ENCODE measurements at regions of chr3 and their contacts with region 1.

Region 1: DNA sequence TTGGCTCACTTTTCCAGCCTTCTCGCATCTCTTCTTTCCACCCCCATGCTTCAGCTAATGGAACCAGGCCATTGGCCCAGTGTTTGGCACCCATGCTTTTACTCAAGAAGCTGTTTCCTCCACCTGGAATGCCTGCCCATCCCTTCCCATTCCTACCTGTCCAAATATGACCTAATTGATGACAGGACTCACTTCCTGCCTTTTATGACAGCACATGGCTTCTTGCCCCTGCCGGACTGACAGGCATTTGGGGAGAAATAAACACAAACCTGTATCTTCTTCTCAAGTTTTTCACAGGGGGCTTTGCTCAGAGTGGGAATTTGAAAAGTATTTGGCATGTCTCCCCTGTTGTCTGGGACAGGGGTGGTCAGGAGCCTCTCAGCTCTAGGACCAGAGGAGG is 120.1 kb downstream of the ABHD5 start:
- DNase-seq: no peak
- H3K4me3 ChIP-seq: no peak overlapping the region
- H3K27ac ChIP-seq: no peak overlapping the region
- H3K4me1 ChIP-seq: peaks cover 5% of the 10 kb centered on the region
- H3K27me3 ChIP-seq: no peaks in the 10 kb centered on the region
- CTCF ChIP-seq: no peak

Region 2: DNA sequence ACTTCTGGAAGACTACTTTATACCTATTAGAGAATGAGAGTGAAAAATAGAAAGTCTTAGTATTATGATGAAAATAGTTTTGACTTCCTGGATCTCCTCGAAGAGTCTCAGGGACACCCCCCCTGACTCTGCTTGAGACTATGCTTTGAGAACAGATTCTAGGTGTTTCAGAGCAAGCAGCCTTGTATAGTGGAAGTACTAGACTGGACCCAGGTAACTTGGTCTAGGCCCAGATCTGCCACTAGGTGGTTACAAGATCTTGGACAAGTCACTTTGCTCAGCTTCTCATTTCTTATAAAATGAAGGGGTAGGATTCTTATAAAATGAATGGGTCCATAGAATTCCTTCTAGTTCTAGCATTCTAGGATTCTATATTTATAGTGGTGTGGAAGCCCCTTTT is 110.9 kb before region 1 on chr3:
- CTCF ChIA-PET with region 1: no interaction called
- dilution Hi-C with region 1: no loop called
- in situ Hi-C with region 1: no loop called
- intact Hi-C with region 1: no loop called
- DNase-seq: peak; percentile 37
- H3K4me3 ChIP-seq: no peak overlapping the region
- H3K27ac ChIP-seq: no peak overlapping the region
- H3K4me1 ChIP-seq: peaks cover 18% of the 10 kb centered on the region
- H3K27me3 ChIP-seq: no peaks in the 10 kb centered on the region
- CTCF ChIP-seq: peak; percentile 58 to 69

Region 3: GRCh38 chr3:43776101-43776500 is 34.7 kb before region 1 on chr3:
- CTCF ChIA-PET with region 1: interaction called, 19 read pairs
- dilution Hi-C with region 1: no loop called
- in situ Hi-C with region 1: no loop called
- intact Hi-C with region 1: no loop called
- DNase-seq: no peak
- H3K4me3 ChIP-seq: no peak overlapping the region
- H3K27ac ChIP-seq: no peak overlapping the region
- H3K4me1 ChIP-seq: peaks cover 6% of the 10 kb centered on the region
- H3K27me3 ChIP-seq: no peaks in the 10 kb centered on the region
- CTCF ChIP-seq: no peak

Region 4: DNA sequence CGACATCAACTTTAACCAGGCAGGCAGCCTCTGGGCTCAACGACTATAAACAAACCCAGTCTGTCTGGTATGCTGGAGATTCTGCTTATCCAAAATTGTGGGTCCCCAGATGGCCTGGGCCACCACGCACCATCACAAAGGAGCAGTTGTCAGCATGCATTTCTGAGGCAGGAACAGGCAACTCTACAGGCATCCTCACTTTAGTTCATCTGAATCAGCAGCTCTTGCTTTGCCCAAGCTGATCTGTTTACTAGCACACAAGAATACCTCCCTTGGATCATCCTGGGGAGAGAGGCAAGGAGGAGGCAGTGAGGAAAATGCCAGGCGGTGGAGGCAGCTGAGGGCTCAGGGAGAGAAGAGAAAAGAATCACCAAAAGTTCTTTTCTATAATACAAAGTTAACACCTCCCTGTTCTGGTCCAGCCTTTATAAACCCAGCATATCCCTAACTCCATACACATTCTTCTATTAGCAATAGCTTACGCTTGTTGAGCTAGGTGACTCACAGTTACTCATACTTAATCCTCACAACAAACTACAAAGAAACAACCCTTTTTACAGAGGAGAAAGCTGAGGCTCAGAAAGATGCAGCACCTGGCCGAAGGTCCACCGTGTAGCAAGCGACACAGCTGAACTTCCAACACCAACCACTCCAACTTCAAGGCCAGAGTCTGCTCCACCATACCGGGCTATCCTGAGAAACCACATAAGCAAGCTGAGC is 1131.6 kb after region 1 on chr3:
- CTCF ChIA-PET with region 1: no interaction called
- dilution Hi-C with region 1: no loop called
- in situ Hi-C with region 1: no loop called
- intact Hi-C with region 1: no loop called
- DNase-seq: peak; percentile 71
- H3K4me3 ChIP-seq: no peak overlapping the region
- H3K27ac ChIP-seq: peak overlapping the region; percentile 36
- H3K4me1 ChIP-seq: peaks cover 8% of the 10 kb centered on the region
- H3K27me3 ChIP-seq: no peaks in the 10 kb centered on the region
- CTCF ChIP-seq: no peak

Measured in mammary epithelial cell (primary cell).